ENCODE measurements at regions of chr9 and their contacts with region 1.

Region 1: GRCh38 chr9:68625559-68625958 is 79.5 kb upstream of the PIP5K1B start:
- DNase-seq: no peak
- H3K4me3 ChIP-seq: no peak overlapping the region
- H3K27ac ChIP-seq: no peak overlapping the region
- H3K4me1 ChIP-seq: no peaks in the 10 kb centered on the region
- H3K27me3 ChIP-seq: peaks cover 23% of the 10 kb centered on the region
- CTCF ChIP-seq: no peak

Region 2: DNA sequence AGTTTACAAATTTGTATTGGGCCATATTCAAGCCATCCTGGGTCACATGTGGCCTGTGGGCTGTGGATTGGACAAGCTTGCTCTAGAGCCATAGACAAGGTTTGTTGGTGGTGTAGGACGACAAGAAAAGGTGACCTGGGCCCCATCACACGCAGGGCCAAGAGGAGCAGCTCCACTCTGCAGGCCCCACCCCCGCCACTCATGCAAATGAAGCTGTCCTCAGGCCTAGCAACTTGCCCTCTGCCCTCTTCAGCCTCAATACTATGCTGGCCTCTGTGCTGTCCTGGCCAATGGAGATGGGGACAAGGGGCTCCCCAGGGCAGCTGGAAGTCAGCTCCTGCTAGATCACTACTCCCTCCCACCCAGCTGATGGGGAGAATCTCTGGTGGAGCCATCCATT is 29.7 kb before region 1 on chr9:
- CTCF ChIA-PET with region 1: no interaction called
- POLR2A ChIA-PET with region 1: no interaction called
- intact Hi-C with region 1: no loop called
- DNase-seq: no peak
- H3K4me3 ChIP-seq: no peak overlapping the region
- H3K27ac ChIP-seq: no peak overlapping the region
- H3K4me1 ChIP-seq: no peaks in the 10 kb centered on the region
- H3K27me3 ChIP-seq: no peaks in the 10 kb centered on the region
- CTCF ChIP-seq: no peak

Region 3: DNA sequence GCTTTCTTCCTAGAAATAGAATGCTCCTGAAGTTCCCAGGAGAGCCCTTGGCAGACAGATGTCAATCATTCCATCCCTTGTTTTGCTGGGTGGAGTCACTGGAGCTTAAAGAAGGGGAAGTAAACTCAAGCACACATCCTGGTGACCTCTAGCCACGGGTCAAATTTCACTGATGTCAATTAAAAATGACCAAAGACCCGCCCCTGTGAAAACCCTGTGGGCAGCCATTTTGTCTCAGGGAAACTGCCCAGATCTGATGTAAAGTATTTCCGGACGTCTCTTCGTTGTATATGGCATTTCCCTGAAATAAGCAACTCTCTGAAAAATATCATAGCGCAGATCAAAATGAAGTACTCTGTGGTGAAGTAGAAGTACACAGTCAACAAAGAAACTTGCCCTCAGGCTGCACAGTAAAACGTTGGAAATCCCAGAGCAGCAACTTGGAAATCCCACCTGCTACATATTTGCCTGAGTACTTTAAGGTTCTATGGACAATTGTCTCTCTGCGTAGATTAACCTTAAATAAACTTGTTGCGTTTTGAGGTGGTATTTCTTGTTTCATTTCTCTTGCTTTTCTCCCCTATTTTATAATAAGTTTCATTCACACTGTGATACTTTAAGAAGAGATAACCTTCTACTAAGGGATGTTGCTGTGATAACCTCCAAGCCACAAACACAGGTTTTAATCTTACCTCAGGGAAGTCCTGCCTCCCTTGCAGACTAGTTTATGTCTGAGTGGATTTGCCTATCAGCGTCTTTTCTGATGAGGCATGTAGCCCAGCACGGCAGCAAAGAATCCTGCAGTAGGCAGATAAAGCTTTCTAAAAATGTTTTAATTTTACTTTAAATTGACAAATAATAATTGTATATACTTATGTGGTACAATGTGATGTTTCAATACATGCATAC is 18.6 kb after region 1 on chr9:
- CTCF ChIA-PET with region 1: no interaction called
- POLR2A ChIA-PET with region 1: no interaction called
- intact Hi-C with region 1: loop called (anchors 2 kb)
- DNase-seq: no peak
- H3K4me3 ChIP-seq: no peak overlapping the region
- H3K27ac ChIP-seq: no peak overlapping the region
- H3K4me1 ChIP-seq: no peaks in the 10 kb centered on the region
- H3K27me3 ChIP-seq: peaks cover 19% of the 10 kb centered on the region
- CTCF ChIP-seq: no peak

Region 4: GRCh38 chr9:70100362-70100761 is 1474.8 kb after region 1 on chr9:
- CTCF ChIA-PET with region 1: no interaction called
- POLR2A ChIA-PET with region 1: no interaction called
- intact Hi-C with region 1: no loop called
- DNase-seq: no peak
- H3K4me3 ChIP-seq: no peak overlapping the region
- H3K27ac ChIP-seq: no peak overlapping the region
- H3K4me1 ChIP-seq: no peaks in the 10 kb centered on the region
- H3K27me3 ChIP-seq: peaks cover 32% of the 10 kb centered on the region
- CTCF ChIP-seq: no peak